GM18951 (cell line): ENCODE measurements at regions of chr11 and their contacts with region 1.

Region 1: DNA sequence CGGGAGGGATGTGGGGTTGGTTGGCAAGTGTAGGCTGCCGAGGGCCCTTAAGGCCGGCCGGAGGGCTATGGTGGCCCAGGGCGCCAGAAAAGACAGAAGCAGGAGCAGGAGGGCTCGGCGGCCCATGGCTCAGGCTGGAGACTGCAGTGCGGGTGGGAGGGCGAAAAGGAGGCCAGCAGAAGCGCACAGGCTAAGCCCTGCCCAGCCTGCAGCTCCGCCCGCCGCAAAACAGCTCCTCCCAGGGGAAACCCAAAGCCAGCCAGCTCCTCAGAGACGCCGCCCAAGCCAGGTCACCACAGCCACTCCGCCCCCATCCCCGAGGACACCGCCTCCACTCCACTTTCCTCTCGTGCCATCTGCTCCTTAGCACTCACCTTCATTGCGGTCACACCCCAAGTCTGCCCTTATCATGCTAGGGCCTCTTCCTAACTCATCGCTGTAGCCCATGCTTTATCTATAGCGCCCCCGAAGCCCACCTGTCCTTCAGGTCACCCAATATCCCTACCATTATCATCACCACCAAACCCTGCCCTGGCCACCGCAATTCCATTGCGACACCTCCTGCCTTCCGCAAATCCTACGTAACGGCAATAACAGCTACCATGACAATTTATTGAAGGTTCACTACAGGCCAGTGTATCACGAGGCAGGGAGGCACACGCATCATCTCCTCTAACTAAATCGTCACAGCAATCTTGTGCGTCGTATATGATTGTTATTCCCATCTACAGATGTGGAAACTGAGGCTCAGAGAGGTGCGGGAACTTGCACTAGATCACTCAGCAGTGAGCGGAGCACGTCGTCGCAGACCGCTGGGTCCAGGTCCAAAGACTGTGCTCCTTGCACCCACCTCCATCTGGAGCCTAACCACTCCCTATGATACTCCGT is at the start of gene PRCP:
- POLR2A ChIP-seq: peak; percentile 85

Region 2: DNA sequence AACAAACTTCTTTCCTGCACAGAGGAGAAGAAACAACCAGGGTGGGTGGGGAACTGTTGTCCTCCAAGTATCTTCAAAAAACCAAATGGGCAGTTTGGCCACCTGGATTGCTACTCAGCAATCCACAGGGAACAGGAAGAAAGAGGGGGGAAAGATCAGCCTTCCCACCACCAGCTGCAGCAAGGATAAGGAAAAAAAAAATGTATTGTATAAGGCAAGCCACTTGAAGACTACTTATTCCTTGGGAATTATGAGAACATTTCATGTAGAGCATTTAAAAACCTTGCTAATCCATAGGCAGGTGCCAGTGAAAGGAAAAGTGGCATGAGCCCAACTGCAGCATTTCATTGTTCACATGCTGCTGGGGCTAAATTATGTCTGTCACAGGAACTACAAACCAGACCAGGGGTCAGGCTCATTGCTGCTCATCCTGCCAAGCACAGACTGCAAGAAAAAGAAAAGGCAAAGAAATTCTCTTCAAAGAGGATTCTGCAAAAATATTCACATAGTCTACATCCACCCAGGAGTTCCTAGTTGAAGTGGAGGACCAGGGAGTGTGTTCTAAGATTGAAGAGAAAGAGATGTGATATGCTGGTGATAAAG is 169.0 kb after region 1 on chr11:
- in situ Hi-C with region 1: loop called (anchors 5 kb)
- POLR2A ChIP-seq: no peak

Region 3: DNA sequence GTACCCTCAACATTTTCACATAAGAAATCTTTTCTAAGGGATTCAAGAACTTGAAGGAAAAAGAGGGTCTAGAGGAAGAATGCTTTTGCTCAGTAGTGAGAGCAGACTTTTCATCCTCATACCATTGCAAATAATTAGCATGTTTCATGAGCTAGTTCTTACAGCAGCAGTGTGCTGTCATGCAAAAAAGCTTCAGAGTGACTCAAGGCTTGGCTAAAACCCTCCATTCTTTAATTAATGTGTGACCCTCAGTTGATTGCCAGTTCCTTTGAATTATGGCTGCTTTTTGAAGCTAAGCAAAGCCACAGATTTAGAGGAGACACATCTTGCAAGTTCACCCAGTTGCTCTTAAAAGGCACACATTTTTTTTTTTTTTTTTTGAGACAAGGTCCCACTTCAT is 219.8 kb after region 1 on chr11:
- in situ Hi-C with region 1: no loop called
- POLR2A ChIP-seq: no peak

Region 4: DNA sequence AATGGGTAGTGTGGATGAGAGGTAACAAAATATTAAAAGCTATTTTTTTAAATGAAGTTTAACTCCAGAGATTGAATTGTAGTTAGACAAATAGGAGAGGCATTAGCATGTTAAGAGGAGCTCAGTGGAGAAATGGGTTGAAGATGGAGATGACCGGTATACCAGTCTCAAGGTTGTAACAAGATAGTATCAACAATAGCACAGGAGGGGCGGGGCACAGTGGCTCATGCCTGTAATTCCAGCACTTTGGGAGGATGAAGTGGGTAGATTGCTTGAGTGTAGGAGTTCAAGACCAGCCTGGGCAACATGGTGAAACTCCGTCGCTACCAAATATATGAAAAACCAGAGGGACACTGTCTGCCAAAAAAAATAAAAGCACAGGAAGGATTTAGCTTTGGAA is 286.9 kb after region 1 on chr11:
- in situ Hi-C with region 1: loop called (anchors 10 kb)
- POLR2A ChIP-seq: peak; percentile 15